ENCODE measurements at regions of chr5 and their contacts with region 1.

Region 1: GRCh38 chr5:79020861-79021561 is 35.9 kb upstream of the ARSB start:
- DNase-seq: peak; percentile 60 to 68 (median 64)
- ATAC-seq: peak; percentile 81
- H3K4me3 ChIP-seq: no peak overlapping the region
- H3K27ac ChIP-seq: no peak overlapping the region
- H3K4me1 ChIP-seq: peaks cover 14% of the 10 kb centered on the region
- H3K27me3 ChIP-seq: no peaks in the 10 kb centered on the region
- CTCF ChIP-seq: peak; percentile 63 to 76 (median 71)
- POLR2A ChIP-seq: no peak

Region 2: DNA sequence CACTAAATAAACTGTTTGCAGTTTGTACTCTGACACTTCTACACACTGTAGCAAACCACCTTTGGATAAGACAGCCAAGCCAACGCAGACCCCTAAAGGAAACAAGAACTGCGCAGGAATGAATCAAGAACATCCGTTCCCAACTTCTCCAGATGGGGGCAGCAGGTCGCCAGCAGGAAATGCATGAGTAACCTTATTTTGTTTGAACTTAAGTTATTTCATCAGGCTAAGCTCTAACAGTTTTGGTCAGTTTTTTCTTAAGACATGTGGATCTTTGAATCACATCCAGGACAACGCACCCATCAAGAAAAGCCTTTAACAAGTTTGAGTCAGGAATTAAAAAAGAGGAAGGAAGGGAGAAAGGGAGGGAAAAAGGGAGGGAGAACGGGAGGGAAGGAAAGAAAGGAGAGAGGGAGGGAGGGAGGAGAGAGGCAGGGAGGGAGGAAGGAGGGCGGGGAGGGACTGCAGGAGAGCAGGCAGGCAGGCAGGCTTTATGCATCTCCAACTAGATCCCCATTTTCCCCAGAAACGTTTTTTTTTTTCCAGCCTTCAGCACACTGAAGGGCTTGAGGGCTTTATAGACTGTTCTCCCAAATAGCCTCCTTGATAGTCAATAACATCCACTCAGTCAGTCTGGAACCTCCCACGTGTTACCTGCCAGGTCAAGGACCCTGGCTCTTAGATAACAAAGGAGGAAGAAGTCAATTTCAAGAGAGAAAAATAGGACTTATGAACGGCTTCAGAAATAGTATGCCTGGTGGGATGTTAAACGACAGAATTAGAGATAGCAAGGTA is 112.8 kb after region 1 on chr5:
- intact Hi-C with region 1: loop called (anchors 10 kb)
- DNase-seq: peak; percentile 71 to 83 (median 72)
- ATAC-seq: peak; percentile 89
- H3K4me3 ChIP-seq: no peak overlapping the region
- H3K27ac ChIP-seq: peak overlapping the region in 3 of 4 donors; percentile 14 to 39 (median 31)
- H3K4me1 ChIP-seq: peaks cover 13% of the 10 kb centered on the region
- H3K27me3 ChIP-seq: no peaks in the 10 kb centered on the region
- CTCF ChIP-seq: peak; percentile 52 to 76 (median 74)
- POLR2A ChIP-seq: no peak

Measured in body of pancreas (tissue), 4 donors.